Heart left ventricle (tissue), 16 donors: ENCODE measurements at regions of chr6 and their contacts with region 1.

Region 1: GRCh38 chr6:2783188-2783963 is 18.2 kb downstream of the WRNIP1 start:
- DNase-seq: no peak
- ATAC-seq: peak in 1 of 4 donors; percentile 8
- H3K4me3 ChIP-seq: no peak overlapping the region
- H3K27ac ChIP-seq: no peak overlapping the region
- H3K4me1 ChIP-seq: peaks cover 0 to 34% (median 4%) of the 10 kb centered on the region in 12 donors
- H3K27me3 ChIP-seq: no peaks in the 10 kb centered on the region
- CTCF ChIP-seq: no peak
- POLR2A ChIP-seq: no peak

Region 2: GRCh38 chr6:2911171-2911570 is 127.8 kb after region 1 on chr6:
- intact Hi-C with region 1: loop called in 2 of 10 experiments (anchors 10 kb)
- DNase-seq: no peak
- ATAC-seq: no peak
- H3K4me3 ChIP-seq: no peak overlapping the region
- H3K27ac ChIP-seq: no peak overlapping the region
- H3K4me1 ChIP-seq: peaks cover 0 to 4% (median 0%) of the 10 kb centered on the region in 12 donors
- H3K27me3 ChIP-seq: no peaks in the 10 kb centered on the region
- CTCF ChIP-seq: no peak
- POLR2A ChIP-seq: no peak